Natural killer cell (primary cell): ENCODE measurements at regions of chr12 and their contacts with region 1.

Region 1: GRCh38 chr12:11581179-11581755 is 68.2 kb upstream of the ETV6 start:
- DNase-seq: peak; percentile 47 to 86
- ATAC-seq: peak in 2 of 3 donors; percentile 34 to 41
- H3K4me3 ChIP-seq: no peak overlapping the region
- H3K4me3 Mint-ChIP-seq: no peak overlapping the region
- H3K27ac ChIP-seq: no peak overlapping the region
- H3K27ac Mint-ChIP-seq: no peak overlapping the region
- H3K4me1 ChIP-seq: no peaks in the 10 kb centered on the region
- H3K4me1 Mint-ChIP-seq: peaks cover 0 to 2% of the 10 kb centered on the region in 2 donors
- H3K27me3 ChIP-seq: no peaks in the 10 kb centered on the region
- H3K27me3 Mint-ChIP-seq: peaks cover 23 to 29% of the 10 kb centered on the region in 2 donors
- CTCF ChIP-seq: peak; percentile 83

Region 2: DNA sequence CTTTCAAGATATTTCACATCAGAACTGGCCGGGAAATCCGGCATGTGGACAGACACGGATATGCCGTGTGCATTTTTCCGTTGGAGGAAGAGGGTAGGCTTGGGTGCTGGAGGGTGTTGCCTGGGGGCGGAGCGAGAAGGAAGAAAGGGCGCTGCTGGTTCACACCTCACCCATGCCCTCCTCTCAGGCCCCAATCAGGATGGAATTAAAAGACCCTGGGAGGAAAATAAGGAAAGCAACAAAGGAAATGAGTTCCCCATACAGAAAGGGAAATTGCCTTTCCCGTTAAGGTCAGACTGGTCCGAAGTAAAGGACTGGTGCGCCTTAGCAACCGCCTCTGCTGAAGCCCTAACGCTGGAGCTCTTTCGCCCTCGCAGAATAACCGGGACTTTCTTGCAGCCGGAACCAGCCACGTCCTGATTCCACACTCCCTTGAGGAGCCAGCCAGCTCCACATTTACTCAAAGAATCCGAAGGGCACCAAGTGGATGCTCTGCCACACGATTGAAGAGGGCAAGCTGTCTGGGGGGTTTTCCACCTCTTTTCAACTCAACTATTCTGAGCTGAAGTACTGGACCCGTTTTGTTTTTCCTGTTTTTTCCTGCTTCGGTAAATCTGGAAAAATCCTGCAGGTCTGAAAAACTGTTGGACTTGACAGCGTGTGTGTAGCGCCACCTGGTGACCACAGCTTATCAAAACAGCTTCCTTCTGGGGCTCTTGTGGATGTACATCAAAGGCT is 451.8 kb after region 1 on chr12:
- intact Hi-C with region 1: loop called (anchors 1 kb)
- DNase-seq: peak; percentile 39 to 86
- ATAC-seq: peak; percentile 71 to 83 (median 77)
- H3K4me3 ChIP-seq: peak overlapping the region; percentile 44
- H3K4me3 Mint-ChIP-seq: peak overlapping the region; percentile 74
- H3K27ac ChIP-seq: no peak overlapping the region
- H3K27ac Mint-ChIP-seq: peak overlapping the region in 1 of 2 donors; percentile 6
- H3K4me1 ChIP-seq: peaks cover 16% of the 10 kb centered on the region
- H3K4me1 Mint-ChIP-seq: peaks cover 12 to 19% of the 10 kb centered on the region in 2 donors
- H3K27me3 ChIP-seq: no peaks in the 10 kb centered on the region
- H3K27me3 Mint-ChIP-seq: peaks cover 9 to 42% of the 10 kb centered on the region in 2 donors
- CTCF ChIP-seq: peak; percentile 93

Region 3: GRCh38 chr12:12327802-12328201 is 746.5 kb after region 1 on chr12:
- intact Hi-C with region 1: loop called (anchors 5 kb)
- DNase-seq: peak in 1 of 2 donors; percentile 79
- ATAC-seq: peak; percentile 44 to 73 (median 71)
- H3K4me3 ChIP-seq: no peak overlapping the region
- H3K4me3 Mint-ChIP-seq: no peak overlapping the region
- H3K27ac ChIP-seq: no peak overlapping the region
- H3K27ac Mint-ChIP-seq: peak overlapping the region in 1 of 2 donors; percentile 49
- H3K4me1 ChIP-seq: no peaks in the 10 kb centered on the region
- H3K4me1 Mint-ChIP-seq: peaks cover 6 to 12% of the 10 kb centered on the region in 2 donors
- H3K27me3 ChIP-seq: no peaks in the 10 kb centered on the region
- H3K27me3 Mint-ChIP-seq: peaks cover 21 to 28% of the 10 kb centered on the region in 2 donors
- CTCF ChIP-seq: peak; percentile 71